ENCODE measurements at regions of chr11 and their contacts with region 1.

Region 1: DNA sequence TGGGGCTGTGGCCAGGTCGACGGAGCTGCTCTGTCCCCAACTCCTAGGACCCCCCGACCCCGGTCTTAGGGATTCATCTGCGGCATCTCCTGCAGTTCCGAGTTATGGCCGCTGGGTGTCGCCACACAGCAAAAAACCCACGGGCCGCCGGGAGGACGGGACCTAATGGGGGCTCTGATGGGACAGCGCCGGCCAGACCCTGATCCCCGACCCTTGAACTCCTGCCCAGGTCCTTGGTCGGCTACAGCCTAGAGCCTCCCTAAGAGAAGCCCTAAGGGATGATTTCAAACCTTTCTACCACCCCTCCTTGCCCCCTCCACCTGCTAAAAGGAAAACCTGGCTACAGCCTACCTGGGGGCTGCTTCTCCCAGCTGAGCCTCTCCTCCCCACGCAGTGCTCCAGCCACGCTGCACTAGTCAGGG is 30.8 kb upstream of the LRRC10B start:
- DNase-seq: peak; percentile 22
- H3K4me3 ChIP-seq: no peak overlapping the region
- H3K27ac ChIP-seq: no peak overlapping the region
- H3K4me1 ChIP-seq: no peaks in the 10 kb centered on the region
- H3K27me3 ChIP-seq: no peaks in the 10 kb centered on the region
- CTCF ChIP-seq: peak; percentile 88 to 97 (median 90)
- POLR2A ChIP-seq: no peak

Region 2: DNA sequence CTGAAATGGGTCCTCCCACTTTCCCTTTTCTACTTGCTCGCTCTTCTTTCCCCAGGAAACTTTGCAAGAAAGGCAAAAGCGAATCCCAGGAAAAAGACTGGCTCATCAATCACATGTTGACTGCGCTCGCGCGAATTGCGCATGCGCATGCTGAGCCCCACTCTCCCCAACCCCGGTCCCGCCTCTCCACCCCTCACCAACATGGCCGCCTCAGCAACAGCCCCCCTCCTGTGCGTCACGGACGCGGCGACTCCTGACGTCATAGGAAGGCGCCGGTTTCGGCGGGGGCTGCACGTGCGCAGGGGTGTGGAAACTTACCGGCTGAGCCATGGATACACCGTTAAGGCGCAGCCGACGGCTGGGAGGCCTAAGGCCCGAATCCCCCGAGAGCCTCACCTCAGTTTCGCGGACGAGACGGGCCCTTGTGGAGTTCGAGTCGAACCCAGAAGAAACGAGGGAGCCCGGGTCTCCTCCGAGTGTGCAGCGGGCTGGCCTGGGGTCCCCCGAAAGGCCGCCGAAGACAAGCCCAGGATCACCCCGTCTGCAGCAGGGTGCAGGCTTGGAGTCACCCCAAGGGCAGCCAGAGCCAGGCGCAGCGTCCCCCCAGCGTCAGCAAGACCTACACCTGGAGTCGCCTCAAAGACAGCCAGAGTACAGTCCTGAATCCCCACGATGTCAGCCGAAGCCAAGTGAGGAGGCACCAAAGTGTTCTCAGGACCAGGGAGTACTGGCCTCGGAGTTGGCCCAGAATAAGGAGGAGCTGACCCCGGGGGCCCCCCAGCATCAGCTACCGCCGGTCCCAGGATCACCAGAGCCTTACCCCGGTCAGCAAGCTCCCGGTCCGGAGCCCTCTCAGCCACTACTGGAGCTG is 635.7 kb before region 1 on chr11 and contains the start of gene CCDC86:
- intact Hi-C with region 1: no loop called
- DNase-seq: peak; percentile 95
- H3K4me3 ChIP-seq: peak within 1 kb of the TSS; percentile 51 to 63
- H3K27ac ChIP-seq: peak within 1 kb of the TSS; percentile 70 to 79
- H3K4me1 ChIP-seq: peaks cover 22% of the 10 kb centered on the region
- H3K27me3 ChIP-seq: no peaks in the 10 kb centered on the region
- CTCF ChIP-seq: peak in 2 of 4 experiments; percentile 12 to 34
- POLR2A ChIP-seq: peak; percentile 29
- total RNA-seq, gene CCDC86: 48.7 to 56.7 TPM

Region 3: GRCh38 chr11:61129639-61130523 is 347.9 kb before region 1 on chr11:
- intact Hi-C with region 1: no loop called
- DNase-seq: peak; percentile 90
- H3K4me3 ChIP-seq: peak overlapping the region in 1 of 2 donors; percentile 10
- H3K27ac ChIP-seq: peak overlapping the region; percentile 66 to 74
- H3K4me1 ChIP-seq: no peaks in the 10 kb centered on the region
- H3K27me3 ChIP-seq: no peaks in the 10 kb centered on the region
- CTCF ChIP-seq: peak; percentile 99 to 100 (median 100)
- POLR2A ChIP-seq: no peak

Region 4: GRCh38 chr11:61516675-61517572 is 39.2 kb after region 1 on chr11:
- intact Hi-C with region 1: loop called (anchors 2 kb)
- DNase-seq: no peak
- H3K4me3 ChIP-seq: no peak overlapping the region
- H3K27ac ChIP-seq: no peak overlapping the region
- H3K4me1 ChIP-seq: peaks cover 6% of the 10 kb centered on the region
- H3K27me3 ChIP-seq: no peaks in the 10 kb centered on the region
- CTCF ChIP-seq: peak; percentile 88 to 95 (median 90)
- POLR2A ChIP-seq: no peak

Region 5: GRCh38 chr11:61639816-61640443 is 162.2 kb after region 1 on chr11:
- intact Hi-C with region 1: loop called (anchors 10 kb)
- DNase-seq: no peak
- H3K4me3 ChIP-seq: no peak overlapping the region
- H3K27ac ChIP-seq: no peak overlapping the region
- H3K4me1 ChIP-seq: no peaks in the 10 kb centered on the region
- H3K27me3 ChIP-seq: no peaks in the 10 kb centered on the region
- CTCF ChIP-seq: no peak
- POLR2A ChIP-seq: no peak

Measured in prostate gland (tissue), 2 donors.